Left lung (tissue), 14 donors: ENCODE measurements at regions of chr12 and their contacts with region 1.

Region 1: DNA sequence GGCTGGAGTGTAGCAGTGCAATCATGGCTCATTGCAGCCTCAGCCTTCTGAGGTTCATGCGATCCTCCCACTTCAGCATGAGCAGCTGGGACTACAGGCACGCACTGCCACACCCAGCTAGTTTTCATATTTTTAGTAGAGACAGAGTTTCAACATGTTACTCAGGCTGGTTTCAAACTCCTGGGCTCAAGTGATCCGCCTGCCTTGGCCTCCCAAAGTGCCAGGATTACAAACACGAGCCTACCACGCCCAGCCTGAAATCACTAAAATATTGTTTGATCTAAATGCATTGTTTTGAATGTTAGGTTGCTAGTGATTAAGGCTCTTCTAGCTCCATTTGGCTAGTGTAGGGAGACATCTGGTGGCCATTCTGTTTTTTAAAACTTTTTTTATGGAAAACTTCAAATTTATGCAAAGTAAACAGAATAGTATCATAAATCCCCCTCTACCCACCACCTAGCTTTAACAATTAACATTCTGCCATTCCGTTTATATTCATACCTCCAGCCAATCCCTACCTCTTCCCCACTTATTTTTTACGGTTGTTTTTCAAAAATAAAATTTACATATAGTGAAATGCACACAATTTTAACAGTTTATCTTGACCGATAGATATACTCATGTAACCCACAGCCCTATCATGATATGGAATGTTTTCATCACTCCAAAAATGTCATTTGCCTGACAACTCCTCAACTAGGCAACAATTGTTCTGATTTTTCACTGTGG is 37.8 kb downstream of the MYO1H start:
- DNase-seq: peak in 2 of 4 donors; percentile 55 to 56
- ATAC-seq: peak; percentile 89
- H3K4me3 ChIP-seq: no peak overlapping the region
- H3K27ac ChIP-seq: no peak overlapping the region
- H3K4me1 ChIP-seq: peaks cover 0 to 6% of the 10 kb centered on the region in 2 donors
- H3K27me3 ChIP-seq: no peaks in the 10 kb centered on the region
- CTCF ChIP-seq: peak in 1 of 2 donors; percentile 28

Region 2: GRCh38 chr12:108907476-108908351 is 477.8 kb before region 1 on chr12:
- intact Hi-C with region 1: no loop called
- DNase-seq: peak in 2 of 4 donors; percentile 34 to 66
- ATAC-seq: peak; percentile 67
- H3K4me3 ChIP-seq: no peak overlapping the region
- H3K27ac ChIP-seq: no peak overlapping the region
- H3K4me1 ChIP-seq: peaks cover 0 to 27% of the 10 kb centered on the region in 2 donors
- H3K27me3 ChIP-seq: no peaks in the 10 kb centered on the region
- CTCF ChIP-seq: no peak

Region 3: GRCh38 chr12:109110988-109111495 is 274.5 kb before region 1 on chr12:
- intact Hi-C with region 1: loop called in 1 of 2 experiments (anchors 10 kb)
- DNase-seq: peak; percentile 81 to 93 (median 92)
- ATAC-seq: peak; percentile 97
- H3K4me3 ChIP-seq: peak overlapping the region; percentile 39 to 43
- H3K27ac ChIP-seq: peak overlapping the region; percentile 75 to 79
- H3K4me1 ChIP-seq: peaks cover 5 to 14% of the 10 kb centered on the region in 2 donors
- H3K27me3 ChIP-seq: no peaks in the 10 kb centered on the region
- CTCF ChIP-seq: no peak

Region 4: DNA sequence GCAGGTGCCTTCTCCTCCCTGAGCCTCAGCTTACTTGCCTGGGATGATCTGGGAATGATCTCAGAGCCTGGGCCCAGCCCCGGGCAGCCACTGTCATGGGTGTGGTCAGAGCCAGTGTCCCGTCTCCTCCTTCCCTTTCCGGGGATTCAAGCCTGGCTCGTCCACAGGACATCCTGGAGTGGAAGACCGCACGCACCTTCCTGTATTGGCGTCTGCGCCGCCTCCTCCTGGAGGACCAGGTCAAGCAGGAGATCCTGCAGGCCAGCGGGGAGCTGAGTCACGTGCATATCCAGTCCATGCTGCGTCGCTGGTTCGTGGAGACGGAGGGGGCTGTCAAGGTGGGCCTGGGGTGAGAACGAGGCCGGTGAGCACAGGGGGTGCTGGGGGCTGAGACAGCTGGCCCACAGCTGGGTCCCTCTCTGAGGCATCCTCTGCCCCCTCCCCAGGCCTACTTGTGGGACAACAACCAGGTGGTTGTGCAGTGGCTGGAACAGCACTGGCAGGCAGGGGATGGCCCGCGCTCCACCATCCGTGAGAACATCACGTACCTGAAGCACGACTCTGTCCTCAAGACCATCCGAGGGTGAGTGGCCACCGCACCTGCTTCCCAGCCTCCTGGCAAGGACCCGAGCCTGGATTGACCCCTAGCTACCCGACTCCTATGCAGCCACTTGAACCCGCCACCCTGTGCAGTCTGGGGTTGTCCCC is 120.4 kb before region 1 on chr12:
- intact Hi-C with region 1: loop called in 1 of 2 experiments (anchors 5 kb)
- DNase-seq: no peak
- ATAC-seq: no peak
- H3K4me3 ChIP-seq: no peak overlapping the region
- H3K27ac ChIP-seq: no peak overlapping the region
- H3K4me1 ChIP-seq: no peaks in the 10 kb centered on the region
- H3K27me3 ChIP-seq: no peaks in the 10 kb centered on the region
- CTCF ChIP-seq: no peak

Region 5: DNA sequence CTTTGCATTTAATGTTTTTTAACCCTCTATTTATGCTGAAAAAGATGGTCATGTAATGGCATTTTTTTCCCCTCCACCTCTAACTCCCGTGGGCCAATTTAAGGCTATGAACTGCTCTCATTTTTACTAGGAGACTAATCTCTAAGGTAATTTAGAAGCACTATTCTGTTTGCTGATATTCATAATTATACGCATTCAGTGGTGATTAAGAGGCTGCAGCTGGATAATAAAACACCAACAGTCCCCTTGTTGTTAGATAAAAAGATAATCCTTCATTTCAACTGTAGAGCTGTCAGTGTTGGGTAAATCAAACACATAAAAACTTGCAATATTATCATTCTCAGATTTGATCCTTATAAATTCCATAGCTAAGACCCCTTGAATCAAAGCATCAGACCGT is 28.9 kb before region 1 on chr12:
- intact Hi-C with region 1: no loop called
- DNase-seq: no peak
- ATAC-seq: no peak
- H3K4me3 ChIP-seq: no peak overlapping the region
- H3K27ac ChIP-seq: no peak overlapping the region
- H3K4me1 ChIP-seq: no peaks in the 10 kb centered on the region
- H3K27me3 ChIP-seq: peaks cover 0 to 11% of the 10 kb centered on the region in 2 donors
- CTCF ChIP-seq: no peak